ENCODE measurements at regions of chr3 and their contacts with region 1.

Region 1: GRCh38 chr3:71050538-71051258 is 532.8 kb downstream of the FOXP1 start:
- DNase-seq: peak; percentile 79
- H3K4me3 Mint-ChIP-seq: peak overlapping the region; percentile 46
- H3K27ac Mint-ChIP-seq: peak overlapping the region; percentile 72
- H3K4me1 Mint-ChIP-seq: peaks cover 75% of the 10 kb centered on the region
- H3K27me3 Mint-ChIP-seq: no peaks in the 10 kb centered on the region

Region 2: GRCh38 chr3:70684701-70685100 is 366.0 kb before region 1 on chr3:
- intact Hi-C with region 1: no loop called
- DNase-seq: no peak
- H3K4me3 Mint-ChIP-seq: no peak overlapping the region
- H3K27ac Mint-ChIP-seq: no peak overlapping the region
- H3K4me1 Mint-ChIP-seq: no peaks in the 10 kb centered on the region
- H3K27me3 Mint-ChIP-seq: no peaks in the 10 kb centered on the region

Region 3: DNA sequence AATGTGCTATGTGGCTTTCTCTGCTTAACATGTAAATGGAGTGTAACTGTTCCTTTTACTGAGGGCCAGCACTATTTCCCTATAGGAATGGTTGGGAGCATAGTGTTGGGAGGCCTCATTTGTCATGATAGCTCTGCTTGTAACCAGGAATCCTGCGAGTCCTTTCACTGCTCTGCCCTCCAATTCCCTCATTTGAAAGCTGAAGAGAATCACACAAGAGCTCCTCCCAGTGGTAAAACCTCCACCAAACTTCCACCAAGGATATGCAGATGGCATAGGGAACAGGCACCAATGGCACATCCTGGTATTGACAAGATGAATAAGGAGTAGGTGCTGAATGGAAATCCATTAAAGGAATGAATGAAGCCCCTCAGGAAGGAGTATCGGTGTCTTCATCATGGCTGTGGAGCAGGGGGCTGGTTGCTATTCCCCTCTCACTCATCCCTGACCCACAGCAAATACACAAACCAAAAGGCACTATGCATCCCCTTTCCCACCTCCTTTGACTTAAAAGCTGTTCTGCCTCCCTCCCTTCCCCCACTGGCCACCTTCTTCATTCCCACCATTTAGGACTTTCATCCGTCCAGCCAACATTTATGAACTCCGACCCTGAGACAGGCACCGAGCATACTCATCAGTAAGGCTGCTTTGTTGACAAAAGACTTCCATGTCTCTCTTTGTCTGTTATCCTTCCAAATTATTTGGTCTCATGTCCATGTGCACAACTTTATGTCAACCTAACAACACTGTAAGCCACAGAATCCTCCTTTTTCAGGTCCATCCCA is 28.0 kb before region 1 on chr3:
- intact Hi-C with region 1: no loop called
- DNase-seq: no peak
- H3K4me3 Mint-ChIP-seq: no peak overlapping the region
- H3K27ac Mint-ChIP-seq: no peak overlapping the region
- H3K4me1 Mint-ChIP-seq: peaks cover 36% of the 10 kb centered on the region
- H3K27me3 Mint-ChIP-seq: no peaks in the 10 kb centered on the region

Region 4: DNA sequence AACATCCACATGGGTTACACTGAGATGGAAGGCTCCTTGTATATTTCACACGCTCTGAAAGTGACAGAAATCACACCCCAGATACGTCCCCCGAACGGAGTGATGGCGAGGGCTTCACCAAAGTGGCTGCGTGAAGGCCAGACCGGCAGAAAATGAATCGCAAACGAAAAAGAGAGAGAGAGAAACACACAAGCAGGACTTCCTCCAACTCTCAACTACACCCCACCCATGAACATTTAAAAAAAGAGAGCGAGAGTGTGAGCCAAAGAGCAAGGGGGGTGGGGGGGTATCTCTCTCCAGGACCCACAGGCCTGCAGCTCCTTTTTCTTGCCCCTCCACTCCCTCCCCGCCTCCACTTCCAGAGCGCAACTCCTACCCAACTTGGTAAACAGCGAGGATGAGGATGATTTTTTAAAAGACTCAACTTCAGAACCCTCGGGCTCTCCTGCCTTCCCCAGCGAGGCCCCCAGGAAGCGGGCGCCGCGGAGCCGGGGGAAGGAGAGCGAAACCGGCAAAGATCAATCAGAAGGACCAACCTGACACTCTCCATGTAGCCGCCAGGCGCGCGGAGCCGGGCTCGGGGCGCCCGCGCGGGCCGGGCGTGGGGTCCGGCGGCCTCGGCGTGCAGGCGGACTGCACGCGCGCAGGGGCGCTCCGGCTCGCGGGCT is 13.7 kb after region 1 on chr3:
- intact Hi-C with region 1: loop called (anchors 1 kb)
- DNase-seq: peak; percentile 92
- H3K4me3 Mint-ChIP-seq: no peak overlapping the region
- H3K27ac Mint-ChIP-seq: no peak overlapping the region
- H3K4me1 Mint-ChIP-seq: peaks cover 55% of the 10 kb centered on the region
- H3K27me3 Mint-ChIP-seq: no peaks in the 10 kb centered on the region

Region 5: DNA sequence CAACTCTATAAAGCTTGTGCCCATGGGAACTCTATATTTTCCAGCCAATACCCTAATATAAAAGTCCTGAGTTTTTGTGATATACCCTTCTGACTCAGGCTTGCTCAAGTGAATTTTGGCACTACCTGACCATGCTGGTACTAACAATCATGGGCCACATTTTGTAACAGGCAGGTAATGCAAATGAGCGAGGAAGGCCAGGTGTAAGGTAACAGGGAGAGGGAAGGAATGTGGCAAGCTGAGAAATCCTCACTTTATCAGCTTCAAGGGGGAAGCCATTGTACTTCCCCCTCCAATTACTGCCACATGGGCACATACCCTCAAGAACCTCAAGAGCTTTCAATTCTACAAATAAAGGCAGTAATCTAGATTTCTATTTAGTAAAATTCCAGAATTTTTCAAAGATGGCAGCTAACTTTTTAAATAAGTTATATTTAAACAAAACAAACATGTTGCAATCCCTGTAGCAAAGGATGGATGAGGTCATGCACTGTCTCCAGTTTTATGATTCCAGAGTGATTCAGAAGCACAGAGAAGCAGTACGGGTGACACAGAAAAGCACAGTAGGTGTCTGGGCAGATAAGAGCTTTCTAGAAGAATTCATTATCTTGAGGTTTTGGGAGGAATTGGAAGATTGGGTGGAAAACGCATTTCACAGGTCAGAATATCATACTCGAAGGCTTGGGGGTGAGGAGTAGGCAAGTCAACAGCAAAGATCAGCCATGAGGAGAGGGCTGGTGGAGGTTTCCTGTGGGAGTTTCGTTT is 445.2 kb after region 1 on chr3:
- intact Hi-C with region 1: no loop called
- DNase-seq: peak; percentile 77
- H3K4me3 Mint-ChIP-seq: peak overlapping the region; percentile 71
- H3K27ac Mint-ChIP-seq: peak overlapping the region; percentile 81
- H3K4me1 Mint-ChIP-seq: peaks cover 50% of the 10 kb centered on the region
- H3K27me3 Mint-ChIP-seq: peaks cover 4% of the 10 kb centered on the region

Measured in activated CD4-positive, alpha-beta T cell treated with anti-CD3 and anti-CD28 coated beads, Interleukin-2, amount 10 ng/mL, durations not matched to agents 24 days and 14 days (primary cell).